ENCODE measurements at regions of chr18 and their contacts with region 1.

Region 1: GRCh38 chr18:21808185-21808584 is 67.6 kb downstream of the MIB1 start:
- DNase-seq: no peak
- ATAC-seq: no peak
- H3K4me3 Mint-ChIP-seq: no peak overlapping the region
- H3K27ac Mint-ChIP-seq: no peak overlapping the region
- H3K4me1 Mint-ChIP-seq: peaks cover 3% of the 10 kb centered on the region
- H3K27me3 Mint-ChIP-seq: no peaks in the 10 kb centered on the region

Region 2: DNA sequence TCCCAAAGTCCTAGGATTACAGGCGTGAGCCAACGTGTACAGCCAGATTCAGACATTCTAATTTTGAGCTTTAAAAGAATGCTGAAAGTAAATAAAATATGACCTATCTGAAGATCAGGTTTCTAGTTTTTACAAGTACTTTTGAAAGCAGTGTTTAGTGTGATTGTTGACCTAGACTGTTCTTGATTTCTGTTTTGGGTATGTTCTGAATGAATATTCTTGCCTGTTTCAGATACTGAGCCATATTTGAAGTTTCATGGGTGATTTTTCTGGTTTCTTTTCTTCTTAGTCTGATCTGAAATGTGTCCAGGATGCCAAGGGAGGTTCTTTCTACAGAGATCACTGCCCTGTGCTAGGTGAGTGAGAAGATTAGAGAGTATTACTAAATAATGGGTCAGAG is 30.4 kb before region 1 on chr18:
- CTCF ChIA-PET with region 1: no interaction called
- POLR2A ChIA-PET with region 1: no interaction called
- intact Hi-C with region 1: no loop called
- DNase-seq: no peak
- ATAC-seq: no peak
- H3K4me3 Mint-ChIP-seq: no peak overlapping the region
- H3K27ac Mint-ChIP-seq: peak overlapping the region; percentile 11
- H3K4me1 Mint-ChIP-seq: no peaks in the 10 kb centered on the region
- H3K27me3 Mint-ChIP-seq: no peaks in the 10 kb centered on the region

Region 3: DNA sequence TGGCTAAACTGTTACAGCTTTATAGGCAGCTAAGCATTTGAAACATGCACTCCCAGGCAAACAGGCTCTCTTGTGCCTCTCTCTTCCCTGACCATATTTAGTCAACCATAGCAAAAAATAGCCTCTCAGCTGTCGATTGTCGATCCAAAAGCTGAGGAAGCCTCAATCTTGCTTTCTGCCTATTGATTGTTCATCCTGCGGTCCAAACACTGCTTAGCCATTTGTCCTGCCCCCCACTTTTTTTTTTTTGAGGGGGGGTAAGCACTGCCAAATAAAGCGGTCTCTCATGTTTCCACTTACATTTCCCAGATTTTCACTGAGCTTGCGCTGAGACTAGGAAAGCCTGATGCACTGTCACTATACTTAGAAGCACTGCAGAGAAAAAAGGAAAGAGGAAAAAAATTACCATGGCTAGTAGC is 23.2 kb after region 1 on chr18:
- CTCF ChIA-PET with region 1: interaction called, 3 read pairs
- POLR2A ChIA-PET with region 1: no interaction called
- intact Hi-C with region 1: loop called in 1 of 2 experiments (anchors 2 kb)
- DNase-seq: no peak
- ATAC-seq: no peak
- H3K4me3 Mint-ChIP-seq: no peak overlapping the region
- H3K27ac Mint-ChIP-seq: no peak overlapping the region
- H3K4me1 Mint-ChIP-seq: no peaks in the 10 kb centered on the region
- H3K27me3 Mint-ChIP-seq: no peaks in the 10 kb centered on the region

Measured in activated CD4-positive, alpha-beta T cell treated with anti-CD3 and anti-CD28 coated beads for 36 hours (primary cell).